A549 (cell line): ENCODE measurements at regions of chr11 and their contacts with region 1.

Region 1: GRCh38 chr11:118171269-118172062 is 5.0 kb downstream of the SCN2B start:
- DNase-seq: peak; percentile 37 to 82
- ATAC-seq: peak; percentile 81 to 91; a peak in 5 of 6 replicates
- H3K4me3 ChIP-seq: no peak overlapping the region
- H3K27ac ChIP-seq: no peak overlapping the region
- H3K4me1 ChIP-seq: peaks cover 10% of the 10 kb centered on the region; the same call in 2 of the 3 replicates
- CTCF ChIP-seq: peak; percentile 71
- EP300 ChIP-seq: no peak
- POLR2A ChIP-seq: no peak
- RAD21 ChIP-seq: peak; percentile 72 to 77

Region 2: GRCh38 chr11:117932067-117932370 is 239.4 kb before region 1 on chr11:
- CTCF ChIA-PET with region 1: no interaction called
- POLR2A ChIA-PET with region 1: no interaction called
- DNase-seq: no peak
- ATAC-seq: no peak
- H3K4me3 ChIP-seq: no peak overlapping the region
- H3K27ac ChIP-seq: no peak overlapping the region
- H3K4me1 ChIP-seq: no peaks in the 10 kb centered on the region
- CTCF ChIP-seq: no peak
- EP300 ChIP-seq: no peak
- POLR2A ChIP-seq: no peak
- RAD21 ChIP-seq: no peak

Region 3: DNA sequence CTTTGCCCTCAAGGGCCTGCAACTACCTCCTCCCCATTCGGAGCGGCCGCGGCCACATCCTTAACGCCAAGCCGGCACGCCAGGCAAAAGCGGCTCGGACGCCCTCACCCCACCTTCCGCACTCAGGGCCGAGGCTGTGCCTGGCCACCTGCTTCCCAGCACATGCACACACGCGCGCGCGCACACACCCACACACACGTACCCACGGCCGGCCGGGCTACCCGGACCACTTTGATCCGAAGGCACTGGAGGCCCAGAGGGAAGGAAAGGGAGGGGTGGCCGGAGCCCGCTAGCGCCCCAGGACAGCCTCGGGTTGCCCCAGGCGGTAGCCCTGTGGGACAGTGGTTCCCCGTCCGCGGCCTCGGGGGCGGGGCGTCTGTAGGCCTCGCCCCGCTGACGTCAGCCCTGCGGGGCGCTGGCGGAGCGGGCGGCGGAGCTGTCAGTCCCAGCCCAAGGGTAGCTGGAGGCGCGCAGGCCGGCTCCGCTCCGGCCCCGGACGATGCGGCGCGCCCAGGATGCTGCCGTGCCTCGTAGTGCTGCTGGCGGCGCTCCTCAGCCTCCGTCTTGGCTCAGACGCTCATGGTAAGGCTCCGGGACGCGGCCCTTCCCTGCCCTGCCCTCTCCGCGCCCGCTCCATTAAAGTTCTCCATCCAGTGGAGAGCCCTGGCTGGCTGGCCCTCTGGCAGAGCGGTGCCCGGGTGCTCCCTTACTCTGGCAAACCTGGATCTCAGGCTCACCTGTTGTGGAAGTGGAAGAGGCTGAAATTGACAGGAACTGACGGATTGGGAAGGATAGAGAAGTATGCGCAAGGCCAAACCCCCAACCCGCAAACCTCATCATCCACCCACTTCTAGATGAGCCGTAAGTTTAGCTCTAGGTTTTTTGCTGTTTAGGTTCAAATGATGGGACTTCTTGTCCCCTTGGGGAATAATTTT is 185.2 kb before region 1 on chr11 and contains the start of gene IL10RA:
- CTCF ChIA-PET with region 1: no interaction called
- POLR2A ChIA-PET with region 1: no interaction called
- DNase-seq: peak; percentile 40 to 71
- ATAC-seq: peak; percentile 94 to 96
- H3K4me3 ChIP-seq: peak within 1 kb of the TSS; percentile 54
- H3K27ac ChIP-seq: peak within 1 kb of the TSS; percentile 53 to 85; a peak in 5 of 6 replicates
- H3K4me1 ChIP-seq: no peaks in the 10 kb centered on the region
- CTCF ChIP-seq: no peak
- EP300 ChIP-seq: no peak
- POLR2A ChIP-seq: no peak
- RAD21 ChIP-seq: no peak
- polyA plus RNA-seq, gene IL10RA: 0.16 and 0.17 TPM in 2 replicates

Region 4: GRCh38 chr11:118145285-118146227 is 25.9 kb before region 1 on chr11:
- CTCF ChIA-PET with region 1: interaction called, 165 read pairs
- POLR2A ChIA-PET with region 1: no interaction called
- DNase-seq: peak; percentile 67 to 92
- ATAC-seq: peak; percentile 81 to 96
- H3K4me3 ChIP-seq: peak overlapping the region; percentile 55
- H3K27ac ChIP-seq: peak overlapping the region; percentile 34 to 84; a peak in 5 of 6 replicates
- H3K4me1 ChIP-seq: no peaks in the 10 kb centered on the region
- CTCF ChIP-seq: peak; percentile 71
- EP300 ChIP-seq: no peak
- POLR2A ChIP-seq: no peak
- RAD21 ChIP-seq: peak; percentile 87 to 95

Region 5: GRCh38 chr11:118152552-118153471 is 18.7 kb before region 1 on chr11 and contains the start of gene SCN4B:
- CTCF ChIA-PET with region 1: interaction called, 165 read pairs
- POLR2A ChIA-PET with region 1: no interaction called
- DNase-seq: peak; percentile 18 to 56
- ATAC-seq: peak; percentile 49 to 83
- H3K4me3 ChIP-seq: peak within 1 kb of the TSS; percentile 45
- H3K27ac ChIP-seq: peak within 1 kb of the TSS; percentile 35 to 87; a peak in 5 of 6 replicates
- H3K4me1 ChIP-seq: no peaks in the 10 kb centered on the region; the same call in 2 of the 3 replicates
- CTCF ChIP-seq: no peak
- EP300 ChIP-seq: no peak
- POLR2A ChIP-seq: no peak
- RAD21 ChIP-seq: no peak
- polyA plus RNA-seq, gene SCN4B: 0.04 and 0.12 TPM in 2 replicates

Region 6: GRCh38 chr11:118186346-118187107 is 15.1 kb after region 1 on chr11:
- CTCF ChIA-PET with region 1: interaction called, 45 read pairs
- POLR2A ChIA-PET with region 1: no interaction called
- DNase-seq: no peak
- ATAC-seq: no peak
- H3K4me3 ChIP-seq: no peak overlapping the region
- H3K27ac ChIP-seq: no peak overlapping the region
- H3K4me1 ChIP-seq: no peaks in the 10 kb centered on the region
- CTCF ChIP-seq: no peak
- EP300 ChIP-seq: no peak
- POLR2A ChIP-seq: no peak
- RAD21 ChIP-seq: no peak

Region 7: DNA sequence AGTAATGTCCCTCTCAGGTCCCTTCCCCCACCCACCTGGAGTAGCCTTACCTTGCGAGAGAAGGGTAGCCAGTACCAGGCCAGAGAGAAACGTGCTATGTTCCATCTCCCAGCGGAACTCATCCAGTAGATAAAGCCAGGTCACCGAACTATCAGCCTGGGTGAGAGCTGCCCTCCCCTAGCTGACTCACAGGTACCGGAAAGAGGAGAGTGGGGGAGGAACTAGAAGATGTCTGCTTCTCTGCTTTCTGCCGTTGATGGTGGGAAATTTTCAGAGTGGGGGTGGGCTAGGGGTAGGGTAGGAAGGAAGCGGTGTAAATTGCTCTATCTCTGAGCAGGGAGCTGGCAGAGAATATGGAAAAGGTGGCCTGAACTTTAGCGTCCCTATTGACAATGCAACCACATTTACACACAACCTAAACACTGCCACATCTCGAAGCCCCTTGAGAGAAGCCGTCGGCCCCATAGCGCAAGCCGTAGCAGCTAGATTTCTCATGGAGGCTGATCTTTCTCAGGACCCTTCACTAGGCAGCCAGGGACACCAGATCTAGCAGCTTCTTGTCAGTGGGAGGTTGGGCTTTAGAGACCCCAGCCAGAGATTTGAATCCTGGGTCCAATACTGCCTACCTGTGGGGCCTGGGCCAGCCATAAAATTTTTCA is 171.2 kb after region 1 on chr11 and contains the start of gene CD3D:
- CTCF ChIA-PET with region 1: no interaction called
- POLR2A ChIA-PET with region 1: no interaction called
- DNase-seq: no peak
- ATAC-seq: no peak
- H3K4me3 ChIP-seq: no peak within 1 kb of the TSS
- H3K27ac ChIP-seq: no peak within 1 kb of the TSS
- H3K4me1 ChIP-seq: no peaks in the 10 kb centered on the region
- CTCF ChIP-seq: no peak
- EP300 ChIP-seq: no peak
- POLR2A ChIP-seq: no peak
- RAD21 ChIP-seq: no peak
- polyA plus RNA-seq, gene CD3D: not detected in 2 replicates